ENCODE measurements at regions of chr16 and their contacts with region 1.

Region 1: DNA sequence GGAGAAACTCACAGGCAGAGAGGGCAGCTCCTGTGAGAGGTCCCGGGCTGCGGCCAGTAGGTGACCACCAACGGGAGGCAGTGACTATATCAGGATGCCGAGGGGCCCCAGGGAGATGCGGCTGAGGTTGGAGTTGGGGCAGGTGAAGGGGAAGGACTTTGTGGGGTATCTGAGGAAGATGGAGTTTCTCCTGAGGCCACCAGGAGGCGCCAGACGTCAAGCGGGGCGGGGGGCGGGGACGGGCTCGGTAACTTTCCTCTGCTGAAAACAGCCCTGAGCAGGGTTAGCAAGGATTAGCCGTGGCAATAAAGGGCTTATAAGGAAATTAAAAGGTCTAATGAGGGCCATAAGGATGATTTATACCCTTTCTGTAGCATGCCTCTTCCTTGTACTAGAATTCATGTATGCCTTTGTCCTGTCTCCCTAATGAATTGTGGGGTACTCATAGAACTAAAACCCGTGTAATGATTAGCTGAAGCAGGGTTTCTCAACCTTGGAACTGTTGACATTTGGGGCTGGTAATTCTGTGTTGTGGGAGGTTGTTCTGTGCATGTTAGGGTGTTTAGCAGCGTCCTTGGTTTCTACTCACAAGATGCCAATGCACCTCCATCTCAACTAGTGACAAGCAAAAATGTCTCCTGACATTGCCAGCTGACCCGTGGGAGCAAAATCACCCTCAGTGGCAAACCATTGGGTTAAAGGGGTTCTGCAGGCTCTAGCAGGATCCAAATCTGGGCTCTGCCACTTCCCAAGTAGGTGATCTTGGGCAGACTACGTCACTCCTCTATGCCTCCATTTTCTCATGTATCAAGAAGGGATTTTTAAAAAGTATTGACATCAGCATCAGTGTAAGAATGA is 74.8 kb upstream of the GRIN2A start:
- DNase-seq: peak; percentile 50 to 78
- H3K4me3 ChIP-seq: no peak overlapping the region
- H3K27ac ChIP-seq: no peak overlapping the region
- H3K4me1 ChIP-seq: peaks cover 0 to 8% (median 3%) of the 10 kb centered on the region in 4 donors
- H3K27me3 ChIP-seq: peaks cover 0 to 27% (median 0%) of the 10 kb centered on the region in 3 donors
- CTCF ChIP-seq: peak in 5 of 7 experiments; percentile 52 to 86 (median 62)
- EP300 ChIP-seq: no peak
- POLR2A ChIP-seq: no peak

Region 2: DNA sequence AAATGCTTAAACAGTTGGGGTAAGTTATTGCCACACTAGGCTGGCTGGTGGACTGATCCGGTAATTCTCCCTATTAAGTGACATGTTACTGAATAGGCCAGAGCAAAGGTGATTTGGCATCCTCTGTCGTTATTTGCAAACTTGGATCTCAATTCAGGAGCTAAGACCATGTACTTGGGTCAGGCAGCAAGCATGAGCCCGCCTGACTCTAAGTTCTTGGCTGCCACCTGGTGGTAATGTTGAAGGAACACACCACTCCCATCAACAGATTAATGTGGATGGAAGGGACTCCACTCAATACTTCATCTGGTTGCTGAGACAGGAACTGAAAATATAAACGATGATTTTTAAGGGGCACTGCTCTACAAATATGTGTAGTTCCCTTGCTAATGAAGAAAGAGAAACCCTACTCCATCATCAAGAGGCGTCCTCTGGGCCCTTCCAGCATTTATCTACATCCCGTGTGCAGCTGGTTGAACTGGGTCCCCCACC is 252.6 kb after region 1 on chr16:
- intact Hi-C with region 1: loop called (anchors 2 kb)
- DNase-seq: peak; percentile 54 to 94
- H3K4me3 ChIP-seq: no peak overlapping the region
- H3K27ac ChIP-seq: no peak overlapping the region
- H3K4me1 ChIP-seq: peaks cover 4 to 11% (median 7%) of the 10 kb centered on the region in 4 donors
- H3K27me3 ChIP-seq: no peaks in the 10 kb centered on the region
- CTCF ChIP-seq: peak in 5 of 7 experiments; percentile 65 to 84 (median 72)
- EP300 ChIP-seq: no peak
- POLR2A ChIP-seq: no peak